Dorsolateral prefrontal cortex (tissue), 120 donors: ENCODE measurements at regions of chr6 and their contacts with region 1.

Region 1: DNA sequence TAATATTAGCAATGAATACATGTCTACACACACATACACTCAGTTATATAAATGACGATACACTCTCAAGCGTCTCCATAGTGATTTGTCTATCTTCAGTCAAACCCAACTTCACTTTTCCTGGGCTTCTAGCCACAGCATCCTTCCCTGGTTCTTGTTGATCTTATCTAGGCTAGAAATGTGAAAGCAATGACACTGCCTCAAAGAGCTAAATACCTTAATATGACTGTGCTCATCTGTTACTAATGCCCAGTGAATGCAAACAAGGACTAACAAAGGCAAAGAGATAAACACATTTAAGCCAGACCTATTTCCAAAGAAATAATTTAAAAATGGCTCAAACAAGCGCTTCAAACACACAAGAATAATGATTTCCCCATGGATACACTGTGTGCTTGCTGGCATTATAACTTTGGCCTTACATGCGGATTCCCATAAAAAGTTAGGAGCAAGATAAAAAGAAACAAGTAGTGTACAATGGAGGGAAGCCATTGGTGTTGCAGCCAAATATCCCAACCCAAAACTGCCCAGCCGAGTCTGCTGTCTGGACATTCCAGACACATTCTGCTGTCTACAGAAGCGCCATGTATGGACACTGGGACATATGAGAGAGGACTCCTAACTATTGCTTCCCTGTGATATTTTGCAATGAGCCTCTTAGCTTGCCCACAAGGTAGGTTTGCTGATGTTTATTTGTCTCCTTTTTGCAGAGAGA is 19.5 kb upstream of the DAAM2 start:
- DNase-seq: no peak
- H3K4me3 ChIP-seq: no peak overlapping the region
- H3K27ac ChIP-seq: peak overlapping the region in 45 of 59 donors; percentile 8 to 100 (median 95)
- H3K27me3 ChIP-seq: peaks cover 0 to 7% (median 0%) of the 10 kb centered on the region in 45 donors
- CTCF ChIP-seq: no peak

Region 2: DNA sequence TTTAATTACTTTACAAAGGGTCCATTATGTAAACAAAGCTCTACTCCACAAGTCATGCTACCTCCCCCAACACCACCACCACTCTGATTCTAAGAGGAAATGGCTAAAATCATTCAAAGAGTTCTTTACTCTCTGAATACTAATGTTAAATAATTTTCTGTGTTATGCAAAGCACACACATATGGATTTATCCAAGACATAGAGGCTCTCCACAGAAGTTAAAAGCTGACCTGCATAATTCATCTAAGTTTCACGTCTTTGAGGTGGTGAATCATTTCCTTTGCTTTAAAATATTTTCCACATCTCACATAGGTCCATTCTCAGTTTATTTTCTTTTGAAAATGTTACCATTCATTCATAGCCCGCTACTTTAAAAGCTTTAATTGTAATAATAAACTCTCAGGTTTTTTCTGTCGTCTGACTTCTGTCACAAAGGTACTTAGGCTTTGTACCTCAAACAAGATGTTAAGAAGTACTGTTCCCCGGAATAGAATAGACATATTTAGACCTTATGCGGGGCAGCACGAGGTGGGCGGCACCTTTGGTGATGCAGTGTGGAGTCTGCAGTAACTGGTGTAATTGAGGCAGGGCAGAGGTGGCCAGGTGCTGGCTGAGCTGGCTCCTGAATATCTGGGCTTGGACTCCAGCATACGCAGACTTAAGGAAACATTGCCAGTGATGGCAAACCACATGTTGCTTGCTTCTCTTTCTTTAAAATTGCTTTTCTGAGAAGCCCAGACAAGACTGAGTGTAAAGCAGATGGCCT is 103.3 kb before region 1 on chr6:
- intact Hi-C with region 1: loop called in 1 of 2 experiments (anchors 5 kb)
- DNase-seq: no peak
- H3K4me3 ChIP-seq: no peak overlapping the region
- H3K27ac ChIP-seq: peak overlapping the region in 10 of 59 donors; percentile 5 to 94 (median 86)
- H3K27me3 ChIP-seq: no peaks in the 10 kb centered on the region
- CTCF ChIP-seq: no peak

Region 3: DNA sequence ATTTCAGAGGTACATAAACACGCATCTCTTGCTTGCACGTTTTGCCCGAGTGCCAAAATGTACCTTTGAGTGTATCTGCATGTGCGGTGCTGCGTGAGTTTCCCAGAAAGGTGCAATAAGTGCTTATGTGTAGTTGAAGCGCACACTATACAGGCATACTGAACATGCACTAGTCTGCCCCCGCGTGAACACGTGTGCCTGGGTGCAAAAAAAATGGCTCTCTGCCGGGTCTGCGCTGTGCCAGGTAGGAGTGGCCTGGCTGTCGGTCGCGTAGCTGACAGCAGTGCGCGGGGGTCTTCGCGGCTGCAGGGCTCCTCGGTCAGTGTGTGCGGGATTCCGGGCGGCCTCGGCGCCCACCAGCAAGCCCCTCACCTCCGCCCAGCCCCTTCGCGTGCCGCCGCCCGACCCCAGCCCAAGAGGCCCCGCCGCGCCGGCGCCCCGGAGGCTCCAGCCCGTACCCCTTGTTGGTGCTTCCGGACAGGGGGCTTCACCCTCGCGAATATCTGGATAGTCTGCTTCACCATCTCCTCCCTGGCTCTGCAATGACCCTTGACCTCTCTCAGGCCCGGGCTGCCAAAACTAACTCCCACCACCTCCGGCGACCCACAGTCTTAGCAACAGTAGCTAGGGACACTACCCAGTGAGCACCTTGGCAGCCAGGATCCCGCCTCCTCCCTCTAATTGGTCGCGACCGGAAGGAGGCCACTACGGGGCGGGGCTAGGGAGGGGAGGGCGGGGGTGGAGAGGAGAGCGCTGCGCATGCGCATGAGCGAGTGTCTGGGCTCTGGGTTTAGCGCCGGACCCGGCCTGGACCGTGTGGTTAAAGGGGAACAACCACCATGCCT is 47.7 kb before region 1 on chr6 and contains the start of gene KIF6:
- intact Hi-C with region 1: loop called in 1 of 2 experiments (anchors 5 kb)
- DNase-seq: peak; percentile 87 to 96 (median 94)
- H3K4me3 ChIP-seq: peak within 1 kb of the TSS; percentile 54 to 98 (median 85)
- H3K27ac ChIP-seq: peak within 1 kb of the TSS; percentile 49 to 99 (median 94)
- H3K27me3 ChIP-seq: no peaks in the 10 kb centered on the region
- CTCF ChIP-seq: peak in 31 of 56 donors; percentile 5 to 71 (median 36)
- total RNA-seq, gene KIF6: 3.2 to 34.6 (median 11.4) TPM